Left colon (tissue), 2 donors: ENCODE measurements at regions of chr10 and their contacts with region 1.

Region 1: GRCh38 chr10:17742918-17743317 is 9.1 kb upstream of the TMEM236 start:
- DNase-seq: peak in 1 of 2 donors; percentile 71
- ATAC-seq: peak; percentile 26

Region 2: GRCh38 chr10:17474595-17475323 is 268.2 kb before region 1 on chr10:
- intact Hi-C with region 1: no loop called
- DNase-seq: no peak
- ATAC-seq: no peak

Region 3: DNA sequence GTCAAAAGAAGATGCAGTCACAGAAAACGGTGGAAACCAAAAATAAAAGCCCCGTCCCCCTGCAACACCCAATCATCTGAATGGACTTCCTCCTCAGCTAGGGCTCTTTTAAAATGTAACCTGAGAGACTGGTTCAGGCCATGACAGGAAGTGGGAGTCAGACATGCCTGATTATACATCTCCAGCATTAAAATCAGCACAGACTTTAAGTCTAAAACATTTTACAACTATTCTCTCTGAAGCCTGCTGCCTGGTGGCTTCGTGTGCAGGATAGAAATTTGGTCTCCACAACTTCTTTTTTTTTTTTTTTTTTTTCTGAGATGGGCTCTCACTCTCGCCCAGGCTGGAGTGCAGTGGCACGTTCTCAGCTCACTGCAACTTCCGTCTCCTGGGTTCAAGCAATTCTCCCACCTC is 156.1 kb before region 1 on chr10:
- intact Hi-C with region 1: no loop called
- DNase-seq: no peak
- ATAC-seq: no peak

Region 4: DNA sequence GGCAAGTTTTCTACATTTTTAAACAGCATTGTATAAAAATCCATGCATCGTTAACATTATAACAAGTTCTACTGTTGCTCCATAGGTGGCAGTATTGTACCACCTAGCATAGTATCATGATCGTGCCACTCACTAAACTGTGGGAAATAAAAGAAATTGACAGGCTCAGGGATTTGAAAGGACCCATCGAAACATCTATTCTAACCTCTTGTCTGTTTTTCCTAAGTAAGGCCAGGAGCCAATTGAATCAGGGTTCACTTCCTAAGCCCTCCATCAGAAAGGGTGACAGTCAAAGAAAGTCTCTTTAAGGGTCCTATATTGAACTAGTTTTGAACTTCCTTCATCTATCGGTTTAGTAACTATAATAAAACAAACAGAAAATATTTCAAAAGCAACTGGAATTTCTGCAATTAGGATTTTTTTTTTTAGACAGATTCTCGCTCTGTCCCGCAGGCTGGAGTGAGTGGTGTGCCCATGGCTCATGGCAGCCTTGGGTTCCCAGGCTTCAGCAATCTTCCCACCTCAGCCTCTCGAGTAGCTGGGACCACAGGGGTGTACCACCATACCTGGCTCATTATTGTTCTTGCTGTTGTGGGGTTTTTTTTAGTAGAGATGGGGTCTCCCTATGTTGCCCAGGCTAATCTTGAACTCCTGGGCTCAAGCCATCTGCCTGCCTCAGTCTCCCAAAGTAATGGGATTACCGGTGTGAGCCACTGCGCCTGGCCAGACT is 135.2 kb before region 1 on chr10:
- intact Hi-C with region 1: loop called (anchors 2 to 10 kb)
- DNase-seq: no peak
- ATAC-seq: peak; percentile 87

Region 5: GRCh38 chr10:17617031-17617911 is 125.6 kb before region 1 on chr10 and contains the start of gene HACD1:
- intact Hi-C with region 1: loop called in 1 of 2 experiments (anchors 10 kb)
- DNase-seq: peak; percentile 66 to 75
- ATAC-seq: peak; percentile 83
- total RNA-seq, gene HACD1: 3.2 to 6.1 TPM

Region 6: DNA sequence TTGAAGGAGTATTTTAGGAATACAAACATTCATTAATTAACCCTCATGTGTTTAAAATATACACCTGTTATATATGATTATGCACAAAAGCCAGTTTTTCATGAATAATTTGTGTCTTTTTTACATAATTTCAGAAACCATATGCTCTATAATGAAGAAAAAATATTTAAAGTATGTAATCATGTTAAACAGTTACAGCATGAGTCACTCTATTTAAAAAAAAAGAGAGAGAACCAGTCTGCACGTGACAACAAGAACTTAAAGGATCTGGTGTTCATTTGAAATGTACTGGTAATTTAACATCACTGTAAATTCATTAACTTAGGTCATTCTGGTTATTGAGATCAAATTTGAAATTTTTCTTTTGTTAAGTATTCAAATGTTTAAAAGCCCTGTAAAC is 625.8 kb after region 1 on chr10:
- intact Hi-C with region 1: no loop called
- DNase-seq: no peak
- ATAC-seq: no peak